Cardiac septum (tissue), 1 donor: ENCODE measurements at regions of chr7 and their contacts with region 1.

Region 1: GRCh38 chr7:33243319-33243881 is 114.0 kb downstream of the BBS9 start:
- DNase-seq: no peak

Region 2: DNA sequence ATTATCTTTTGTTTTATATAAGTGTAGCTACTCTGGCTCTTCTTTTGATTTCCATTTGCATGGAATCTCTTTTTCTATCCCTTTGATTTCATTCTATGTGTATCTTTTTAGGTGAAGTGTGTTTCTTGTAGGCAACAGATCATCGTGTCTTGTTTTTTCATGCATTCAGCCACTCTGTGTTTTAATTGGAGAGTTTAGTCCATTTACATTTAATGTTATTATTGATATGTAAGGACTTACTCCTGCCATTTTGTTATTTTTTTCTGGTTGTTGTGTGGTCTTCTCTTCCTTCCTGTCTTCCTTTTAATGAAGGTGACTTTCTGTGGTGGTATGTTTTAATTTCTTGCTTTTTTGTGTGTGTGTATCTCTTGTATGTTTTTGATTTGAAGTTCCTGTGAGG is 32.4 kb before region 1 on chr7:
- intact Hi-C with region 1: no loop called
- DNase-seq: no peak

Region 3: DNA sequence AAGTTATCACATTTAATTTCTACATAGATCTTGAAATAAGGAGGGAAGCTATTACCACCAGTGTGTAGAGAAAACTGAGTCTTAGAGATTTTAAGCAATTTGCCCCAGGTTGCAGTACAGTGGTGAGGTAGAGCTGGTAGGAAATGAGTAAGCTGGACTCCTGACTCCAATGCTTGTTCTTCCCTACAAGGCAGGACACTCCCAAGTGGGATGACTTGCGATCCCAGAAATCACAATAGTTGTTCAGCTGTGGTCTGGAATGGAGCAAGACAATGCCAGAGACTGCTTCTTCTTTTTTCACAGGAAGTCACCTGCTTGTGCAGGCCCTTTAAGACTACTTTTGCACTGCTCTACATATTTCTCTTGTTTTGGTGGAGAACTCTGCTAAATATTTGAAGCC is 334.8 kb after region 1 on chr7:
- intact Hi-C with region 1: no loop called
- DNase-seq: no peak

Region 4: DNA sequence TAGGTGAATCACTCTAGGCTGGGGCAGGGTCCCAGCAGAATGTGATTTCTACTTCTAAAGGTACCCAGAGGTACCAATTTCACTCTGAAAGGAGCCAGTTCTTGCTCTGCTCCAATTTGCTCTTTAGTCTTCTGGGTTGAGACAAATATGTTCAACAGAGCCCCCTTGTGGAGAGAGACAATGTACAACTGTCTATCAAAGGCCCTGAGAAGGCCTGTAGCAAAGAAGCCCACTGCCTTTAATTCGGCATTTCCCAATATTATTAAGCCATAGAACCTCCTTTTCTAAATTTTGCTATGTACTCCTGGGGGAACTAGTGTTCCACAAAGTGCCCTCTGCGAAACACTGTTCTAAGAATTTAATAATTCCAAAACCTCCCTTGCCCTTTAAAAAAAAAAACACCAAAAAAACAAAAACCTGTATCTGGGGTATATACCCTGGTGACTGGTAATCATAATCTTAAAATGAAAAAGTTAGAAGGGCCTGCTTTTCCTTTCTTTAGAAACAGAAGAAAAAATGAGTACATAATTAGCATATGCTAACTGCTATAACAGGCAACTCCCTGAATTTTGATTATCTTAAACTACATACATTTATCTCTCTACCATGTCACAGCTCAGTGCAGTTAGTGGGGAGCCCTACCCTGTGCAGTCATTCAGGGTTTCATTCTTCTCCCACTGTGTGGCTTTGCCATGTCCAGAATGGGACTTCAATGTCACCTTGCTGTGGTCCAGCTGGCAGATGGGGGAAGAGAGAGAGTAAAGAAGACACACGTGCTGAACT is 501.1 kb after region 1 on chr7:
- intact Hi-C with region 1: loop called (anchors 10 kb)
- DNase-seq: no peak